WTC11 (cell line): ENCODE measurements at regions of chr15 and their contacts with region 1.

Region 1: DNA sequence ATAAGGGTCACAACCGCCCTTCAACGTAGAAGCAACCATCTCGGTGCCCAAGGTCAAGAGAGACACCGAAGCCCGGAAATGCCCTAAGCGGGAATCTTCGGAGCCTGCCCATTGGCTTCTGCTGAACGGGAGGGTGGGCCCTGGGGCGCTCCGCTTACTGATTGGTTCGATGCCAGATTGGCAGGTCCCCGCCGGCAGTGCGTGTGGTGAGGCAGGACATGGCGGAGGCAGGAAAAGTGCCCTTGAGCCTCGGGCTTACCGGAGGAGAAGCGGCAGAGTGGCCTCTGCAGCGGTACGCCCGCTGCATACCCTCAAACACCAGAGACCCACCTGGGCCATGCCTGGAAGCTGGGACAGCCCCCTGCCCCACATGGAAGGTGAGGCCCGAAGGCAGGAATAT is at the start of gene REC114:
- DNase-seq: peak; percentile 20
- ATAC-seq: peak; percentile 66
- H3K4me3 Mint-ChIP-seq: no peak within 1 kb of the TSS
- H3K27ac Mint-ChIP-seq: no peak within 1 kb of the TSS
- H3K4me1 Mint-ChIP-seq: no peaks in the 10 kb centered on the region
- H3K27me3 Mint-ChIP-seq: no peaks in the 10 kb centered on the region
- CTCF ChIP-seq: no peak
- total RNA-seq, gene REC114: not detected in 3 replicates

Region 2: DNA sequence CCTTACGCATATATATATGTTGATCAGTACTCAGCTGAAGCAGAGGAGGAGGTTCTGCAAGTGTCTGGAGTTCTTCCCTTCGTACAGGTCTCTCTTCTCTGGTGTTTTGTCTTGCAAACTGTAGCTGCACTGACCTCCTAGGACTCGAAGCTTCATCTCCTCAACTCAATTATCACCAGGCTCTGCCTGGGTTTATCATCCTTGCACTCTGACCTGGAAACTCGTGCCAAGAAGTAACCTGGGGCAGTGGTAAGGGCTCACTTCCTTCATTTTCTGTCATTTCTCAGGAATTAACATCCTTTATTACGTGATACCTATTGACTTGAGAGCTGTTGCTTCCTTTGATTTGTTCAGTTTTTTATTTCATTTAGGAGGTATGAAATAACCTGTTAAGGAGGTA is 14.4 kb after region 1 on chr15:
- CTCF ChIA-PET with region 1: no interaction called
- POLR2A ChIA-PET with region 1: interaction called, 10 read pairs
- DNase-seq: no peak
- ATAC-seq: peak; percentile 63
- H3K4me3 Mint-ChIP-seq: no peak overlapping the region
- H3K27ac Mint-ChIP-seq: peak overlapping the region; percentile 14; the same call in 1 of the 2 replicates
- H3K4me1 Mint-ChIP-seq: peaks cover 16% of the 10 kb centered on the region
- H3K27me3 Mint-ChIP-seq: no peaks in the 10 kb centered on the region; the same call in 1 of the 2 replicates
- CTCF ChIP-seq: no peak